Activated naive CD4-positive, alpha-beta T cell treated with anti-CD3 and anti-CD28 coated beads for 36 hours (primary cell): ENCODE measurements at regions of chr5 and their contacts with region 1.

Region 1: DNA sequence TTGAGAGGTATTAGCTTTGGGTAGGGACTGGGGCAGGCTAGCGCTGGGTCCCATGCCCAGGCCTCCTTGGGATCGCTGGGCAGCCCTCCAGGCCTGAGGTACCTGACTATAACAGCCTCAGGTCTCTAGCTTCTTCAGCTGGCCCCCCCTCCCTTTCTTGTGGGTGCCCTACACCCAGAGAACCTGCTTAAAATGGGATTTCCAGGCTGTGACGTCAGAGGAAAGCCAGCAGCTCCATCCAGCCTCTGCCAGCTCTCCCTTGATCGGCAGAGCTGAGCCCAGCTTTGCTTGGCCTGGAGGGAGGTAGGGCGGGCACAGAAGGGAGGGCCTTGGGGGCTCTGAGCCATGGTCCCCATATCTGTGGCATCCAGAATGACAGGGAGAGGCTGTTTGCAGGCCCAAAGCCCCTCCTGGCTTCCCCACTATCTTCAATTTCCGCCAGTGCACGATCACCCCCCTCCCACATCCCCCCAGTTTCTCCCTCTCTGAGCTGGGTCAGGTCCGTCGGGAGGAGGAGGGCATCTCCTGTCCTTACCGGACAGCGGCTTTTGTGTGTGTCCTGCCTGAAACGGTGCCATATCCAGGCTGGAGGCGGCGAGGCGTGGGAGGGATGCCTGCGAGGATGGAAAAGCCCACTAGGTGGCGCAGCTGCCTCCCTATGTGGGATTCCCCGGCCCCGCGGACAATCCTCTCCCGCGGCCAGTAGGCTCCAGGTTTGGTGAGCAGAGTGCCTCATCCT is 10.8 kb downstream of the REEP2 start:
- DNase-seq: peak; percentile 89
- H3K4me3 Mint-ChIP-seq: peak overlapping the region; percentile 34
- H3K27ac Mint-ChIP-seq: no peak overlapping the region
- H3K4me1 Mint-ChIP-seq: peaks cover 6% of the 10 kb centered on the region
- H3K27me3 Mint-ChIP-seq: peaks cover 1% of the 10 kb centered on the region

Region 2: DNA sequence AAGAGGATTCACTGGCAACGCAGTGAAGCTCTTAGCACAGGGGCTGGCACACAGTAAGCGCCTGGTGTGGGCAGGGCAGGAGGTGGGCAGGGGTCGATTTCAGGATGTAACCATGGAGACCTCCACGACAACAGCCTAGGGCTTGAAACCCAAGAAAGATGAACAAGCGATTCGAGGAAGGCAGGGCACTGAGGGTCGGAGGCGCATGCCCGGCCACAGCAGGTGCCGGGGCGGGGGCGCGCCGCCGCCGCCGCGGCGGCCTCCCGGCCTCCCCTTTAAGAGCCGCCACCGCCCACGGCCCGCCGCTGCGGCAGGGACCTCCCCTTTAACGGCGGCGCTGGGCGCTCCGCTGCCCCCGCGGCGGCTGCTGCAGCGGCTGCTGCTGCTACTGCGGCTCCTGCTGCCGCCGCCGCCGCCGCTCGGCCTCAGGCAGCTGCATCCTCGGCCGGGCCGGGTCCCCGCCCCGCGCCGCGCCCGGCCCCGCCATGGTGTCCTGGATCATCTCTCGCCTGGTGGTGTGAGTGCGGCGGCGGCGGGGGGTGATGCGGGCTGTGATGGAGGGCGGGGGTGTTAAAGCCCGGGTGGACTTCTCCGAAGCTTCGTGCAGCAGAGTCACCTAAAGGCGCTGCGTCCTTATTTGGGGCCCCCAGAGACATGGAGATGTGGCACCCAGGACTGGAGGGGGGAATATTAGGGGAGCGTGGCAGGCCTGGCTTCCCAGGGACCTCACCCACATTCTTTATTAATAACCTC is 10.8 kb before region 1 on chr5 and contains the start of gene REEP2:
- CTCF ChIA-PET with region 1: interaction called, 14 read pairs
- intact Hi-C with region 1: no loop called
- DNase-seq: peak; percentile 62
- H3K4me3 Mint-ChIP-seq: peak within 1 kb of the TSS; percentile 72
- H3K27ac Mint-ChIP-seq: no peak within 1 kb of the TSS
- H3K4me1 Mint-ChIP-seq: peaks cover 5% of the 10 kb centered on the region
- H3K27me3 Mint-ChIP-seq: peaks cover 3% of the 10 kb centered on the region
- total RNA-seq, gene REEP2: 1.8 to 2.2 TPM

Region 3: GRCh38 chr5:138498376-138498775 is 48.7 kb after region 1 on chr5:
- CTCF ChIA-PET with region 1: interaction called, 104 read pairs
- intact Hi-C with region 1: loop called (anchors 1 kb)
- DNase-seq: no peak
- H3K4me3 Mint-ChIP-seq: no peak overlapping the region
- H3K27ac Mint-ChIP-seq: no peak overlapping the region
- H3K4me1 Mint-ChIP-seq: no peaks in the 10 kb centered on the region
- H3K27me3 Mint-ChIP-seq: no peaks in the 10 kb centered on the region

Region 4: GRCh38 chr5:138508963-138509362 is 59.3 kb after region 1 on chr5:
- CTCF ChIA-PET with region 1: interaction called, 104 read pairs
- intact Hi-C with region 1: no loop called
- DNase-seq: no peak
- H3K4me3 Mint-ChIP-seq: no peak overlapping the region
- H3K27ac Mint-ChIP-seq: peak overlapping the region; percentile 31
- H3K4me1 Mint-ChIP-seq: no peaks in the 10 kb centered on the region
- H3K27me3 Mint-ChIP-seq: no peaks in the 10 kb centered on the region

Region 5: GRCh38 chr5:139262742-139263445 is 813.2 kb after region 1 on chr5:
- CTCF ChIA-PET with region 1: no interaction called
- intact Hi-C with region 1: loop called (anchors 2 kb)
- DNase-seq: peak; percentile 86
- H3K4me3 Mint-ChIP-seq: no peak overlapping the region
- H3K27ac Mint-ChIP-seq: no peak overlapping the region
- H3K4me1 Mint-ChIP-seq: peaks cover 2% of the 10 kb centered on the region
- H3K27me3 Mint-ChIP-seq: no peaks in the 10 kb centered on the region